H1 (cell line): ENCODE measurements at regions of chr15 and their contacts with region 1.

Region 1: DNA sequence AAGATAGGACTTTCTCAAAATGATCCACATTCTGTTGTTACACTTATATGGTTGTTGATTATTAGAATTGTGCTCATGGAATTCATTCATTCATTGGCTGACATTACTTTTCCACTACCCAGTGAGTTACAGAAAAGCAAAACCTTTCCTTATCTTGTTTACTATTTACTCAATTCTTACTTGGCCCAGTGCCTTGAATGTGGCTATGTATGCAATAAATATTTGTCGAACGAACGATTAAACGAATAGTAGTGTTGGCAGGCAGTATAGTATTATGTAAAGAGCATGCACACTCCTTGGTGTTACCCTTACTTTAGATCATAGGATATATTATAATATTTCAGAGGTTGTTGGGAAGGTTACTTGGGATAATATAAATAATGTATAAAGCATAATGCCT is 31.0 kb downstream of the CTDSPL2 start:
- DNase-seq: no peak
- H3K4me3 ChIP-seq: no peak overlapping the region
- H3K27ac ChIP-seq: no peak overlapping the region
- H3K4me1 ChIP-seq: no peaks in the 10 kb centered on the region
- H3K27me3 ChIP-seq: no peaks in the 10 kb centered on the region
- CTCF ChIP-seq: no peak
- EP300 ChIP-seq: no peak
- POLR2A ChIP-seq: no peak
- RAD21 ChIP-seq: no peak

Region 2: GRCh38 chr15:44441095-44441501 is 17.3 kb before region 1 on chr15:
- CTCF ChIA-PET with region 1: interaction called, 10 read pairs
- POLR2A ChIA-PET with region 1: interaction called, 4 read pairs
- DNase-seq: peak in 1 of 2 experiments; percentile 48
- H3K4me3 ChIP-seq: peak overlapping the region in 2 of 4 experiments; percentile 7 to 30; a peak in 4 of 8 replicates
- H3K27ac ChIP-seq: no peak overlapping the region
- H3K4me1 ChIP-seq: peaks cover 3 to 7% (median 5%) of the 10 kb centered on the region in 4 experiments; a peak in 5 of 7 replicates
- H3K27me3 ChIP-seq: no peaks in the 10 kb centered on the region
- CTCF ChIP-seq: no peak
- EP300 ChIP-seq: no peak
- POLR2A ChIP-seq: no peak
- RAD21 ChIP-seq: no peak

Region 3: DNA sequence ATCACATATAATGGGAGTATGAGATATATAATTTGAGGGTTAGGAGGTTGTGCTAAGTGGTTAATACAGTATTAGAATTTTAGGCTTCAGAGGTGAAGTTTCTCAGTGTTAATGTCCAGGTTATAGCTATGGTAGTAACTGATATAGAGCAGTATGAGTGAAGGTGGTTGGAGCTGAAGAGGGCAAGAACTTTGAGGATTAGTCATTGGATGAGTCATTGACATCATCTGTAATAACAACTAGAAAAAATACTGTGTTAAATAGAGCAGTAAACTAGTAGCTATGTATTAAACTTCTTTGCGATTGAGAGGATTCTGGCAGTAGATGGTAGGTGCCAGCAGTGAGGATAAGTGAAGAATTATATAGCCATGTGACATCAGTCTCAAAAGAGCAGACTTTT is 31.0 kb after region 1 on chr15:
- CTCF ChIA-PET with region 1: no interaction called
- POLR2A ChIA-PET with region 1: no interaction called
- DNase-seq: no peak
- H3K4me3 ChIP-seq: no peak overlapping the region
- H3K27ac ChIP-seq: no peak overlapping the region
- H3K4me1 ChIP-seq: no peaks in the 10 kb centered on the region
- H3K27me3 ChIP-seq: no peaks in the 10 kb centered on the region
- CTCF ChIP-seq: no peak
- EP300 ChIP-seq: no peak
- POLR2A ChIP-seq: no peak
- RAD21 ChIP-seq: no peak

Region 4: DNA sequence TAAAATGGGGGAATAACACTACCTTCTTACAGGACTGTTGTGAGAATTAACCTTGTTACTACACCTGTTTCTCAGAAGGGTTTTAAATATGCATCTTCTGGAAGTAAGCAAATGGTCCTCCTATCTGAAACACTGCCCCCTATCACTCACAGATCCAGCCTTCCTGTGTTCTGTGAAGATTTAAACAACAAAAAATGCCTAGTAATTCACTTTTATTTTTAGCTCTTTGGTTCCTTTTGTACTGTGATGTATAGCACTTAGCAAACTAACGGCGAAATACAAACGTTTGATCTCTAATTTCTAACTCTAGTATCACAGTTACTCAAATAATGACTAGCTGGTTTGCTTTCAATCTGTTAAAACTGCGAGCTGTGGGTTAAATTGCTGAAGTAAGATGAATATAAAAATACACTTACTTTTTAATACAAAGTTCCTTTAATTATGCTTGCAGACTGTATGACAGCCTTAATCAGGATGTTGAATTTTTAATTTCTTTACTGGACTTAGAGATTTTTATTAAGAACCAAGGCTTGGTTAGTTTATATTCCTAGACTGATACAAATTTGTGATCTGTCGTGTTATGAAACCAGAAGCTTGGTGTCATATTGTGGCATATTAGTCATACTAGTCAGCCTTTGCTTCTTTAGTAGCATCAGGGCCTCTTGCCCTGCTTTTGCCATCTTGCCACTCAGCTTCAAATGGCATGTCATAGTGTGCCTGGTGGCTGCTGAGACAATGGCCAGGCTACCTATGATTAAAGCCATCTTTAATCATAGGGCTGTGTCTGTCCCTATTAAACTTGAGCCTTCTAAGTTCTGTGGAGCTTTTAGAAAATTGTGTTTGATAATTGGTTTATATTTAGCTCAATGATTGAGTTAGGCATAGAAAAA is 87.7 kb after region 1 on chr15:
- CTCF ChIA-PET with region 1: no interaction called
- POLR2A ChIA-PET with region 1: no interaction called
- DNase-seq: no peak
- H3K4me3 ChIP-seq: no peak overlapping the region
- H3K27ac ChIP-seq: no peak overlapping the region
- H3K4me1 ChIP-seq: no peaks in the 10 kb centered on the region
- H3K27me3 ChIP-seq: no peaks in the 10 kb centered on the region
- CTCF ChIP-seq: peak in 1 of 3 experiments; percentile 47; a peak in 1 of 4 replicates
- EP300 ChIP-seq: no peak
- POLR2A ChIP-seq: no peak
- RAD21 ChIP-seq: peak in 1 of 2 experiments; percentile 10; a peak in 1 of 4 replicates